Posterior vena cava (tissue), 2 donors: ENCODE measurements at regions of chr3 and their contacts with region 1.

Region 1: DNA sequence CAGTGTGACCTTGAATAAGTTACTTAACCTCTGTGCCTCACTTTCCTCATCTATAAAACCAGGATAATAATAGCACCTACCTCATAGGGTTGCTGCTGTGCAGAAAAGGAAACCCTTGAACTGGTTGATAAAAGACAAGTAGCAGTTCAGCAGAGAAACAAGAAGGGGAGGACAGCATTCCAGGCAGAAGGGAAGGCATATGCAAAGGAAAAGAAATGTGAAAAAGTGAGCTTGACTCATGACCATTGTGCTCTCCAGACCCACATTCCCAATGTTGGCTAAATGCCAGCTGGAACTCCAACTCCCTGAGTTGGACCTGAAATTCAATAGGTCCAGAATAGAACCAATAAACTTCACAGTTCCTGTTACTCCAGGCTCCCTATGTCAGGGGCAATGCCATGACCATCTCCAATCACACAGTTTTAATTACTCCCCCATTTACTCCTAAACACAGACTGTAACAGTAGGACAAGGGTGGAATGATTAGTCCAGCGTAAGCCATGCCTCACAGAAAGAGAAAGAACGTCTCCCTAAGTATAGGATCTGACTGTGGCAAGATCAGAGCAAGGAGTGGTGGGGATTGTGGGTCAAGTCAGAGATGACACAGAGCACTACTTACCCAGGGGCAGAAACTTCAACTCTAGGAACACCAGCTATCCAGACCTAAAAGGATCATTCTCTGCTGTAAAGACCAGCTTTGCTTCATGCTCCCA is 26.9 kb downstream of the PRKAR2A start:
- DNase-seq: no peak

Region 2: DNA sequence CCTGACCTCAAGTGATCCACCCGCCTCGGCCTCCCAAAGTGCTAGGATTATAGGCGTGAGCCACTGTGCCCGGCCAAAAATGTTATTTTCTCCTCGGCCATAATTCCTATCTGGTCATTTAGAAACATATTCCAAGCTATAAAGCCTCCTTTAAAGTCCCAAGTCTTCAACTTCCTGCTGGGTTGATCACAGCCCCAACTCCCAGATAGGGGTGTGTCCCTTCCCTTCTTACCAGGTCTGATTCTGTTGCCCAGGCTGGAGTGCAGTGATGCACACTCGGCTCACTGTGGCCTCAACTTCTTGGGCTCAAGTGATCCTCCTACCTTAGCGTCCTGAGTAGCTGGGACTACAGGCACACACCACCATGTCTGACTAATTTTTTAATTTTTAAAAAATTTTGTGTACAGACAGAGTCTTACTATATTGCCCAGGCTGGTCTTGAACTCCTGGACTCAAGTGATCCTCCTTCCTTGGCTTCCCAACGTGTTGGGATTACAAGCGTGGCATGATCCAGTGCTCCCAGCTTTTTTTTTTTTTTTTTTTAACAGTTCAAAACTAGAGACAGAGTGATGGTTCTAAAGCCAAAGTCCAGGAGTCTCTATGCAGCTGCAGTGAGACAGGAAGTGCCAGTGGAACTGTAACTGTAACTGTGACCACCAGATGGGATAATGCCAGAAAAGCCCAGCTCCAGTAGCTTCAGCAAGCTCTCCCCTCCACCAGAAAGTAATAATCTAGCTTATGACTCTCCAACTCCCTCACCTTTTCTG is 35.1 kb after region 1 on chr3:
- intact Hi-C with region 1: loop called in 1 of 2 experiments (anchors 1 kb)
- DNase-seq: peak; percentile 15